Endothelial cell of umbilical vein (primary cell): ENCODE measurements at regions of chr3 and their contacts with region 1.

Region 1: DNA sequence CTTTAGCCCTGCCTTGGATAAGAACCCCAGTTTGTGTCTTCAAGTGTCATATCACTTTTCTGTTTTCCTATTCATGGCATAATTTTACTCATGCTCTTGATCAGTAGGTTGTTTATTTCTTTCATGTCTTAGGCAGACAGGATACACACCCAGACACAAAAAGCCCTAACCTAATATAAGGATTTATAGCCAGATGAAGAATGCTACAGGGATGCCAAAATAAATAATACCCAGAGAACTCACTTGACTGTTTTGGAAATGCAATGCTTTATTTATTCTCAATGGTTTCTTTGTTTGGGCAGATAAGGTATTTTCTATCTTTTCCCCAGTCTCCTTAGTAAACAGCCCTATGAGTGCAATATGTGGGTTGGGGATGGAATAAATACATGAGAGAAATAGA is 424.0 kb upstream of the PDZRN3 start:
- DNase-seq: peak; percentile 1
- H3K4me3 ChIP-seq: no peak overlapping the region
- H3K27ac ChIP-seq: no peak overlapping the region
- H3K4me1 ChIP-seq: no peaks in the 10 kb centered on the region
- H3K27me3 ChIP-seq: no peaks in the 10 kb centered on the region
- CTCF ChIP-seq: no peak
- POLR2A ChIP-seq: no peak

Region 2: GRCh38 chr3:73516631-73517030 is 532.1 kb before region 1 on chr3:
- CTCF ChIA-PET with region 1: no interaction called
- POLR2A ChIA-PET with region 1: no interaction called
- dilution Hi-C with region 1: no loop called
- intact Hi-C with region 1: loop called (anchors 5 kb)
- DNase-seq: no peak
- H3K4me3 ChIP-seq: no peak overlapping the region
- H3K27ac ChIP-seq: no peak overlapping the region
- H3K4me1 ChIP-seq: no peaks in the 10 kb centered on the region
- H3K27me3 ChIP-seq: no peaks in the 10 kb centered on the region
- CTCF ChIP-seq: no peak
- POLR2A ChIP-seq: no peak